ENCODE measurements at regions of chr20 and their contacts with region 1.

Region 1: DNA sequence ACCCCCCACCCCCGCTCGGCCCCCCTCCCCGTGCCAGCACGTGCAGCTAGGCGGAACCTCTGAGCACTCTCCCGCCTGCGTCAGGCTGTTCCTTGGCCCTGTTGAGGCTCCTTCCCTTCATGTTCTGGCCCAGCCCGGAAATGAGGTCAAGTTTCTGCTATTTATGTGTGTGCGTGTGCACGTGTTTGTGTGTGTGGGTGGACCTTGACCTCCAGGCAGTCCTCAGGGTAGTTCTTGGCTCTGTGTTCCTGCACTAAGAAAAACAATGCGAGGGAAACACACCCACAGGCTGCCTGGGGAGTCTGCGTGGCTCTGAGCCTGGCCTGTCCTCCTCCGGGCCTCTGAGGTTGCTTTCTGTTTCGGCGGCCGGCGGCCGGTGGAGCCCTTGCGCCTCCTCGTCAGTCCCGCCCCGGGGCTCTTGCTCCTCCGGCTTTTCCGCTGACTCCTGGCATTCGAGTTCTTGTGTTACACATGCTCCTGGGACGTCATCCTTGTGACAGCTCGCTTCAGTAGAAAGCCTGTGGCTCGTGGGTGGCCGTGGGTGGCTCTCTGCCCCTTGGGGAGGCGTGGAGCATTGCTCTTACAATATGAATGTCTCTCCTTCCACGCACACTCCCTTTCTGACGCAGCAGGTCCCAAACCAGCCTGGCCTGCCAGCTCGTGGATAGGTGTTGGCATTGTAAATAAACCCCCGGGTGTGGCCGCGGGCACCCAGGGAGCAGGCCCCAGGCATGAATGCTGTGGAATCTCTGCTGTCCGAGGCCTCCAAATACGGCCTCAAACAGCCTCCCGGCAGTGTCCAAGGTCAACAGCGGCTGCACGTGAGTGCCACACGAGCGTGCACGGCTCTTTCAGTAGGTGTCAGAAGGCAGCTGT is 10.0 kb downstream of the SLCO4A1 start:
- DNase-seq: peak; percentile 70
- H3K4me3 ChIP-seq: peak overlapping the region in 1 of 2 experiments; percentile 19; a peak in 1 of 4 replicates
- H3K27ac ChIP-seq: peak overlapping the region in 1 of 2 experiments; percentile 99; a peak in 2 of 4 replicates
- H3K4me1 ChIP-seq: peaks cover 0 to 71% of the 10 kb centered on the region in 2 experiments; a peak in 3 of 4 replicates
- H3K27me3 ChIP-seq: no peaks in the 10 kb centered on the region
- CTCF ChIP-seq: no peak
- EP300 ChIP-seq: no peak
- RAD21 ChIP-seq: no peak

Region 2: GRCh38 chr20:62642040-62642665 is 10.1 kb before region 1 on chr20 and contains the start of gene SLCO4A1:
- CTCF ChIA-PET with region 1: interaction called, 5 read pairs
- POLR2A ChIA-PET with region 1: interaction called, 16 read pairs
- DNase-seq: peak; percentile 98
- H3K4me3 ChIP-seq: peak within 1 kb of the TSS; percentile 35 to 56; a peak in 3 of 4 replicates
- H3K27ac ChIP-seq: peak within 1 kb of the TSS in 1 of 2 experiments; percentile 74; a peak in 1 of 4 replicates
- H3K4me1 ChIP-seq: peaks cover 0 to 64% of the 10 kb centered on the region in 2 experiments; a peak in 2 of 4 replicates
- H3K27me3 ChIP-seq: peaks cover 37% of the 10 kb centered on the region
- CTCF ChIP-seq: no peak
- EP300 ChIP-seq: no peak
- RAD21 ChIP-seq: no peak
- polyA plus RNA-seq, gene SLCO4A1: 0.33 and 0.36 TPM in 2 replicates

Region 3: GRCh38 chr20:62668441-62669027 is 16.2 kb after region 1 on chr20:
- CTCF ChIA-PET with region 1: interaction called, 23 read pairs
- POLR2A ChIA-PET with region 1: no interaction called
- DNase-seq: peak; percentile 96
- H3K4me3 ChIP-seq: no peak overlapping the region
- H3K27ac ChIP-seq: no peak overlapping the region
- H3K4me1 ChIP-seq: no peaks in the 10 kb centered on the region; a peak in 1 of 4 replicates
- H3K27me3 ChIP-seq: no peaks in the 10 kb centered on the region
- CTCF ChIP-seq: peak; percentile 86
- EP300 ChIP-seq: no peak
- RAD21 ChIP-seq: peak; percentile 96

Region 4: DNA sequence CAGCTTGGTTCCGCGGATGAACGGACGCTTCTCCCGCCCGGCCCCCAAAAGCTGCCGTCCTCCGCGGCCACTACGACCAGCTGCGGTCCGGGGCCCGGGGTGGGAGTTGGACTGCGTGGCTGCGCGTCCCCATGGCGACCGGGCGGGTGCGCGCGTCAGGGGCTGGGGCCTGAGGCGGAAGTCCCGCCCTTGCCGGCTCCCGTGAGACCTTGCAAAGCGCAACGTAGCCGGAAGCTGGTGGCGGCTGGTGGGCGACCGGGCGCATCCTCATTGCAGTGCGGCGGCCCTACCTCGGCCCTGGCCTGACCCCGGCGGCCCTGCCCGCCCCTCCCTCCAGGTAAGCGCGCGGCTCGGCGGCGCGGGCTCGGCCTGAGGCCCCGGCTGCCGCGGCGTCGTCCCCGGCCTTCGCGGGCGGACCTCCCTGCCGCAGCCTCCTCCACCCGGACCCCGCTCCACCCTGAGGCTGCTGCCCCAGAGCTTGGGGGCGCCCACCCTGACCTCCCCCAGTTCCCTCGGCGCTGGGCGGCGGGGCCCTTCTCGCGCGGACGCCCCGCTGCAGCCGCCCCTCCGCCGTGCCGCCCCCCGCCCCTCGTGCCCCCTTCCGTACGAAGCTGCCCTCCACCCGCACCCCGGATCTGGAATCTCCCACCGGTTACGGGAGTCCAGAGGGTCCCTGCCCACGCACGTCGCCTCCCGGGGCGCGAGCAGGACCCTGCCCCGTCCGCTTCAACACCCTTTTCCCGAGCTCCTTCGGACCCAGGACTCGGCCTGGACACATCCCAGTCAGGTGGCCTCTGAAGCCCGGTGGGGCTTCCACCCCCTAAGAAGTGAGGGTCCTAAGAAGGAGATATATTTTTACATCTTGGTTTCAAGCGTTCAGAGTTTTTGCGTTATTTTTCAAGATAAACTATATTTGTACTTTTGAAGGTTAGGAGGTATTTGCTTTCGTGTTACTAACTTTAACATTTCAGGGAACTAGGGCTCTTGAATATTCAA is 620.6 kb after region 1 on chr20 and contains the start of gene ARFGAP1:
- CTCF ChIA-PET with region 1: no interaction called
- POLR2A ChIA-PET with region 1: no interaction called
- DNase-seq: peak; percentile 99
- H3K4me3 ChIP-seq: peak within 1 kb of the TSS; percentile 87 to 92
- H3K27ac ChIP-seq: peak within 1 kb of the TSS; percentile 41 to 65; a peak in 3 of 4 replicates
- H3K4me1 ChIP-seq: peaks cover 0 to 20% of the 10 kb centered on the region in 2 experiments; a peak in 2 of 4 replicates
- H3K27me3 ChIP-seq: no peaks in the 10 kb centered on the region
- CTCF ChIP-seq: no peak
- EP300 ChIP-seq: no peak
- RAD21 ChIP-seq: no peak
- polyA plus RNA-seq, gene ARFGAP1: 72.7 and 77.0 TPM in 2 replicates